Esophagus muscularis mucosa (tissue), 4 donors: ENCODE measurements at regions of chr7 and their contacts with region 1.

Region 1: GRCh38 chr7:140003913-140004382 is 58.8 kb downstream of the PARP12 start:
- DNase-seq: no peak
- H3K4me3 ChIP-seq: no peak overlapping the region
- H3K27ac ChIP-seq: no peak overlapping the region
- H3K4me1 ChIP-seq: no peaks in the 10 kb centered on the region
- H3K27me3 ChIP-seq: no peaks in the 10 kb centered on the region
- CTCF ChIP-seq: peak; percentile 36 to 44 (median 38)
- EP300 ChIP-seq: no peak
- POLR2A ChIP-seq: no peak

Region 2: GRCh38 chr7:139494835-139495579 is 508.9 kb before region 1 on chr7:
- intact Hi-C with region 1: loop called (anchors 10 kb)
- DNase-seq: no peak
- H3K4me3 ChIP-seq: no peak overlapping the region
- H3K27ac ChIP-seq: no peak overlapping the region
- H3K4me1 ChIP-seq: peaks cover 0 to 5% (median 4%) of the 10 kb centered on the region in 4 donors
- H3K27me3 ChIP-seq: peaks cover 0 to 13% (median 0%) of the 10 kb centered on the region in 4 donors
- CTCF ChIP-seq: no peak
- EP300 ChIP-seq: no peak
- POLR2A ChIP-seq: no peak

Region 3: DNA sequence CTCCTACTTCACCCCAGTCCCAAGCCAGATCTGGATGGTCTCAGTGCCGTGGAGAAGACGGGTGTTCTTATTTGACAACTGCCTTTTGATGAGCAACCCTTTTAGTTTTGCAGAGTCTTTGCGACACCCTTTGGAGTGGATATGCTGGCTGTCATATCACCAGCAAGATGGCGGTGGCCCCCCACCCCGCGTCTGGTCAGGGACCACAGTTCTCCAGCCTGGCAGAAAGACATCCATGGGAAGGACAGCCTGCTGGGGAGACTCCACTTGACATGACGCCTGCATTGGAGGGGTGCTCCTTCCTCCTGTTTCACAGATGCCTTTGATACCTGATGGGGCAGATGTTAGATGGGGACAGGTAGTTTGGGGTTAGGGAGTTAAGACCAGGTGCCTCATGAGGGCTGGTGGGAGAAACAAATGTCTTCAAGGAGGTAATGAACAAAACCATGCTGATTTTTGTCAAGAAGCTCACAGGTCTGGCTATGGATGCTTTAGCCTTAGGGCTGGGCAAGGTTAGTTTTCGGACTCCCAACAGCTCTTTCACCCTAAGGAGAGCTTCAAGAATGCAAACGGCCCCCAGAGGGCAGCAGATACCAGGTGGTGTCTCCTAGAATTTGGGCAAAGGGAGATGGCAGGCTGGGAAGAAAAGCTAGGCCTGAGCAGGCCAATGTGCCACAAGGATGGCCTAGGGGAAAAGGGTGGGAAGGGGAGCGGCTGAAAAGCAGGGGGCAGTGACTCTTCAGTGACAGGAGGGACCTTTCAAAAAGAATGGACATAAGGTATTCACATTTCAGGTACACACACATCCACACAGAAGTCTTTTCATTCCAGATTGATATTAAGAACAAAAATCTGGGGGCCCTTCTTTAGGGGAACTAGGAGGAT is 385.2 kb before region 1 on chr7:
- intact Hi-C with region 1: loop called (anchors 10 kb)
- DNase-seq: no peak
- H3K4me3 ChIP-seq: no peak overlapping the region
- H3K27ac ChIP-seq: no peak overlapping the region
- H3K4me1 ChIP-seq: no peaks in the 10 kb centered on the region
- H3K27me3 ChIP-seq: no peaks in the 10 kb centered on the region
- CTCF ChIP-seq: peak; percentile 27 to 44 (median 34)
- EP300 ChIP-seq: no peak
- POLR2A ChIP-seq: no peak

Region 4: GRCh38 chr7:139645572-139646523 is 358.1 kb before region 1 on chr7:
- intact Hi-C with region 1: loop called (anchors 1 kb)
- DNase-seq: peak; percentile 93
- H3K4me3 ChIP-seq: no peak overlapping the region
- H3K27ac ChIP-seq: no peak overlapping the region
- H3K4me1 ChIP-seq: peaks cover 16 to 45% (median 38%) of the 10 kb centered on the region in 4 donors
- H3K27me3 ChIP-seq: no peaks in the 10 kb centered on the region
- CTCF ChIP-seq: peak; percentile 84 to 95 (median 88)
- EP300 ChIP-seq: no peak
- POLR2A ChIP-seq: no peak